Activated CD8-positive, alpha-beta T cell treated with anti-CD3 and anti-CD28 coated beads for 36 hours (primary cell): ENCODE measurements at regions of chr2 and their contacts with region 1.

Region 1: GRCh38 chr2:39996653-39997080 is 217.6 kb upstream of the THUMPD2 start:
- DNase-seq: peak; percentile 49
- ATAC-seq: peak; percentile 93
- H3K4me3 Mint-ChIP-seq: no peak overlapping the region
- H3K27ac Mint-ChIP-seq: peak overlapping the region; percentile 71
- H3K4me1 Mint-ChIP-seq: peaks cover 11% of the 10 kb centered on the region
- H3K27me3 Mint-ChIP-seq: no peaks in the 10 kb centered on the region
- CTCF ChIP-seq: no peak

Region 2: GRCh38 chr2:39919511-39920306 is 77.0 kb before region 1 on chr2:
- CTCF ChIA-PET with region 1: no interaction called
- POLR2A ChIA-PET with region 1: no interaction called
- intact Hi-C with region 1: loop called (anchors 5 kb)
- DNase-seq: no peak
- ATAC-seq: peak; percentile 38
- H3K4me3 Mint-ChIP-seq: peak overlapping the region; percentile 37
- H3K27ac Mint-ChIP-seq: peak overlapping the region; percentile 33
- H3K4me1 Mint-ChIP-seq: peaks cover 13% of the 10 kb centered on the region
- H3K27me3 Mint-ChIP-seq: peaks cover 2% of the 10 kb centered on the region
- CTCF ChIP-seq: no peak